ENCODE measurements at regions of chr19 and their contacts with region 1.

Region 1: GRCh38 chr19:57978586-57979289 is 4.4 kb upstream of the C19orf18 start:
- DNase-seq: no peak
- ATAC-seq: no peak

Region 2: GRCh38 chr19:57927587-57927986 is 51.2 kb before region 1 on chr19:
- intact Hi-C with region 1: no loop called
- DNase-seq: no peak
- ATAC-seq: no peak

Region 3: GRCh38 chr19:58261968-58262921 is 283.5 kb after region 1 on chr19:
- intact Hi-C with region 1: loop called (anchors 10 kb)
- DNase-seq: no peak
- ATAC-seq: no peak

Measured in Right ventricle myocardium inferior (tissue), 1 donor.